Activated CD4-positive, alpha-beta T cell treated with anti-CD3 and anti-CD28 coated beads for 36 hours (primary cell): ENCODE measurements at regions of chr16 and their contacts with region 1.

Region 1: DNA sequence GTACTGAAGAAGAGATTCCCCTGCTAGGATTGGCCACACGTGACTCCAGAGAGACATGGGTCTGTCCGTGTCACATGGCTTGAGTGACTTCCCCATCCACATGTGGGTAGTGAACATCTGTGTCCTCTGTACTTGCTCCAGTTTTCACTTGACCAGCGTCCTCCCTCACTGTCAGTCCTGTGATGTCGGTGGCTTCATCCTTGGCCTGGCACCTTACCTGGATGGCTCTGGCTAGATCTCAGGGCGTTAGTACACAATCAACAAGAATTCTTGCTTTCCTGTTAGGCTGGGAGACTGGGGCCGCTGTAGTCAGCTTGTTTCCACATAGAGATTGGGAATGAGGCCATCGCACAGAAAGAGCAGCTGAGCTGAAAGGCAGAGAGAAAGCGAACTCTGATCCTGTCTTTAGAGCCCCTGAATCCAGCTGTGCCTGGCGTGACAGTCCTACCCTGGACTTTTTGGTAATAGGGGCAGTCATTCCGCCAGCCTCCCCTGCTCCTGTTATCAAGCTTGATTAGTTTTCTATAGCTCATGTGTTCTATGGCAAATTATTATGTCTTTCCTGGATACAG is 227.3 kb downstream of the SNX29 start:
- DNase-seq: no peak
- ATAC-seq: no peak
- H3K4me3 Mint-ChIP-seq: no peak overlapping the region
- H3K27ac Mint-ChIP-seq: no peak overlapping the region
- H3K4me1 Mint-ChIP-seq: peaks cover 8% of the 10 kb centered on the region
- H3K27me3 Mint-ChIP-seq: no peaks in the 10 kb centered on the region

Region 2: DNA sequence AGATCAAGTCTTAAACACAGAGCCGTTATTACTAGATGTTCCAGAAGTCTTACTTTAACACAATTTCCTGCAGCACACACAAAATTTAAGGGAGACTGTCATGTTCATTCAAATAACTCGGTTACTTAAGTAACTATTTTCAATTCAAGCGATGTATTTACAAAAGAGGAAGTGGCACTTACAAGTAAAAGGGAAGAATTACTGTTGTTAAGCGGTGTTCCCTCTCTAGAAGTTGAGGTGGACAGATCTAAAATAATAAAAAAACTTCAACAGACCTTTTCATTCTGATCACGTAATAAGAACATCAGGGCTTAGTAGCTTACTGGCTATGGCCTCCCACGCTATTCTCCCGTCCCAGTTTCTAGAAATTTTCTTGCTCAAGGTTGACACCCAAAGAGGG is 435.0 kb before region 1 on chr16:
- CTCF ChIA-PET with region 1: no interaction called
- POLR2A ChIA-PET with region 1: no interaction called
- intact Hi-C with region 1: no loop called
- DNase-seq: no peak
- ATAC-seq: no peak
- H3K4me3 Mint-ChIP-seq: no peak overlapping the region
- H3K27ac Mint-ChIP-seq: peak overlapping the region; percentile 23
- H3K4me1 Mint-ChIP-seq: peaks cover 13% of the 10 kb centered on the region
- H3K27me3 Mint-ChIP-seq: no peaks in the 10 kb centered on the region

Region 3: GRCh38 chr16:11852092-11852809 is 351.6 kb before region 1 on chr16:
- CTCF ChIA-PET with region 1: no interaction called
- POLR2A ChIA-PET with region 1: no interaction called
- intact Hi-C with region 1: no loop called
- DNase-seq: no peak
- ATAC-seq: no peak
- H3K4me3 Mint-ChIP-seq: peak overlapping the region; percentile 99
- H3K27ac Mint-ChIP-seq: peak overlapping the region; percentile 96
- H3K4me1 Mint-ChIP-seq: peaks cover 54% of the 10 kb centered on the region
- H3K27me3 Mint-ChIP-seq: no peaks in the 10 kb centered on the region

Region 4: GRCh38 chr16:12260647-12261262 is 56.9 kb after region 1 on chr16:
- CTCF ChIA-PET with region 1: no interaction called
- POLR2A ChIA-PET with region 1: no interaction called
- intact Hi-C with region 1: loop called in 1 of 2 experiments (anchors 10 kb)
- DNase-seq: no peak
- ATAC-seq: no peak
- H3K4me3 Mint-ChIP-seq: no peak overlapping the region
- H3K27ac Mint-ChIP-seq: no peak overlapping the region
- H3K4me1 Mint-ChIP-seq: no peaks in the 10 kb centered on the region
- H3K27me3 Mint-ChIP-seq: no peaks in the 10 kb centered on the region

Region 5: GRCh38 chr16:12406926-12407690 is 203.2 kb after region 1 on chr16:
- CTCF ChIA-PET with region 1: no interaction called
- POLR2A ChIA-PET with region 1: no interaction called
- intact Hi-C with region 1: no loop called
- DNase-seq: no peak
- ATAC-seq: no peak
- H3K4me3 Mint-ChIP-seq: no peak overlapping the region
- H3K27ac Mint-ChIP-seq: no peak overlapping the region
- H3K4me1 Mint-ChIP-seq: no peaks in the 10 kb centered on the region
- H3K27me3 Mint-ChIP-seq: no peaks in the 10 kb centered on the region